ENCODE measurements at regions of chr21 and their contacts with region 1.

Region 1: GRCh38 chr21:14686466-14687267 is 140.6 kb upstream of the SAMSN1 start:
- DNase-seq: peak in 2 of 9 experiments; percentile 39 to 43
- ATAC-seq: no peak
- H3K4me3 ChIP-seq: no peak overlapping the region
- H3K4me3 Mint-ChIP-seq: peak overlapping the region; percentile 44
- H3K27ac ChIP-seq: peak overlapping the region in 1 of 2 experiments; percentile 5
- H3K27ac Mint-ChIP-seq: peak overlapping the region; percentile 11
- H3K4me1 ChIP-seq: no peaks in the 10 kb centered on the region
- H3K4me1 Mint-ChIP-seq: peaks cover 29% of the 10 kb centered on the region
- H3K27me3 ChIP-seq: no peaks in the 10 kb centered on the region
- H3K27me3 Mint-ChIP-seq: no peaks in the 10 kb centered on the region
- CTCF ChIP-seq: no peak

Region 2: DNA sequence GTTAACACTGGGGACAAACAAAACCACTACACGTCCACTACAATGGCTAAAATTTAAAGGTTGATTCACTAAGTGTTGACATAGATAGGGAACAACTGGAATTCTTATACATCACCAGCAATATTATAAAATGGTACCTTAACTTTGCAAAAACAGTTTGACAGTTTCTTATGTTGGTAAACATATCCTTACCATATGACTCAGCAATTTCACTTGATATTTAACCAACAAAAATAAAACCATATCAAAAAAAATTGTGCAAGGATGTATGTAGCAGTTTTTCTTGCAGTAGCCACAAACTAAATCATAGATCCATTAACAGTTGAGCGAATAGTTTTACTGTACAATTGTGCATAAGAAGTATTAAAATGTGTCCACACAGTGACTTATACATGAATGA is 298.4 kb before region 1 on chr21:
- CTCF ChIA-PET with region 1: no interaction called
- POLR2A ChIA-PET with region 1: no interaction called
- intact Hi-C with region 1: loop called in 1 of 2 experiments (anchors 5 kb)
- DNase-seq: no peak
- ATAC-seq: no peak
- H3K4me3 ChIP-seq: no peak overlapping the region
- H3K4me3 Mint-ChIP-seq: no peak overlapping the region
- H3K27ac ChIP-seq: no peak overlapping the region
- H3K27ac Mint-ChIP-seq: no peak overlapping the region
- H3K4me1 ChIP-seq: peaks cover 5% of the 10 kb centered on the region
- H3K4me1 Mint-ChIP-seq: peaks cover 6% of the 10 kb centered on the region
- H3K27me3 ChIP-seq: no peaks in the 10 kb centered on the region
- H3K27me3 Mint-ChIP-seq: peaks cover 2% of the 10 kb centered on the region
- CTCF ChIP-seq: no peak